Activated T-helper 1 cell treated with anti-CD3 and anti-CD28 coated beads, Interleukin-12 subunit alpha, Interleukin-12 subunit beta, Interleukin-2, Interleukin-4 antibody, amounts not matched to agents 30 ng/mL and 10 ng/mL and 1 ng/mL, durations not matched to agents 14 hours and 24 hours and 36 hours (primary cell): ENCODE measurements at regions of chr19 and their contacts with region 1.

Region 1: DNA sequence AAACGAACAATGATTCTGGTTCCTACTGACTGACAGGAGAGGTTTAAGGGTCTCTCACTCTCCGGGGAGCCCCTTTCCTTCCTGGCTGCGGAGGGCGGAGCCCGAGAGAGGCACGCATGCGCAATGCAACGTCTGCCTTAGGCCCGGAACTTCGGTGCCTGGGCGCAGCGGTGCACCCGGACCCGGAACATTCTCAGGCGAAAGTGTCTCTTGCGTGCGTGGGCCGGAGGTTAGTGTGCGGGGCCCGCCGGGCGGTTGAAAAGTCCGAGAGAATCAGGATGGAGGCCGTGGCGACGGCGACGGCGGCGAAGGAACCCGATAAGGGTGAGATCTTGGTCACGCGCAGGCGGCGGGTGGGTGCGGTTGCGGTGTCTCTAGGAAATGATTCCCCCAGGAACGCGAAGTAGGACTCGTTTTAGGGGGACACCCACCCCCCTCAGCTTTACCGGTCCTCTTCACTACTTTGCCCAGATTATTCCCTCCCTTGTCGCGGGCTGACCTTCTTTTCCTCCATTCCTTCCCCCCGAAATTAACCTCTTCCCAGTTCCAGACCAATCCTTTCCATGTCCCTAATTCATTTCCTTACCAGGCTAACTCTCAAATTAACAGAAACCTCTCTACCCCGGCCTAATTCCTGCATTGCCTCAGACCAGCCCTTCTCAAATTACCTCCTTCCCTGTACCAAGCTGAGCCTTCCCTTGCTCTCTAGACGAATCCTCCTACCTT is at the start of gene CCDC97:
- DNase-seq: peak; percentile 89
- H3K4me3 Mint-ChIP-seq: peak within 1 kb of the TSS; percentile 95
- H3K27ac Mint-ChIP-seq: peak within 1 kb of the TSS; percentile 94
- H3K4me1 Mint-ChIP-seq: peaks cover 65% of the 10 kb centered on the region
- H3K27me3 Mint-ChIP-seq: no peaks in the 10 kb centered on the region
- total RNA-seq, gene CCDC97: 35.3 and 36.1 TPM in 2 replicates

Region 2: GRCh38 chr19:40974633-40975037 is 335.6 kb before region 1 on chr19:
- intact Hi-C with region 1: loop called (anchors 5 kb)
- DNase-seq: peak; percentile 62
- H3K4me3 Mint-ChIP-seq: peak overlapping the region; percentile 24
- H3K27ac Mint-ChIP-seq: no peak overlapping the region
- H3K4me1 Mint-ChIP-seq: peaks cover 48% of the 10 kb centered on the region
- H3K27me3 Mint-ChIP-seq: peaks cover 4% of the 10 kb centered on the region

Region 3: GRCh38 chr19:41123716-41124294 is 186.4 kb before region 1 on chr19:
- intact Hi-C with region 1: loop called (anchors 5 kb)
- DNase-seq: no peak
- H3K4me3 Mint-ChIP-seq: no peak overlapping the region
- H3K27ac Mint-ChIP-seq: no peak overlapping the region
- H3K4me1 Mint-ChIP-seq: peaks cover 29% of the 10 kb centered on the region
- H3K27me3 Mint-ChIP-seq: peaks cover 15% of the 10 kb centered on the region

Region 4: DNA sequence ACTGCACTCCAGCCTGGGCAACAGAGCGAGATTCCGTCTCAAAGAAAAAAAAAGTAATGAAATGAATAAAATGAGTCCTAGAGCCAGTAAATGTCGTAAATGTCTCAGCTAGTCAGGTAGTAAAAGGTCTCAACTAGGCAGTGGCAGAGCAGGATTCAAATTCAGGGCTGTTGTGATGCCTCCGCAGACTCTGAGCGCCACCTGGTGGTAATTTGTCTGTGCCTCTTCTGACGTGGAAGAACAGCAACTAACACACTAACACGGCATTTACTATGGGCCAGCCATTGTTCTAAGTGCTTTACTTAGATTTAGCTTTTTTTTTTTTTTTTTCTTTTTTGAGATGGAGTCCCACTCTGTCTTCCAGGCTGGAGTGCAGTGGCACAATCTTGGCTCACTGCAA is 165.8 kb before region 1 on chr19:
- intact Hi-C with region 1: loop called (anchors 5 kb)
- DNase-seq: peak; percentile 80
- H3K4me3 Mint-ChIP-seq: no peak overlapping the region
- H3K27ac Mint-ChIP-seq: no peak overlapping the region
- H3K4me1 Mint-ChIP-seq: no peaks in the 10 kb centered on the region
- H3K27me3 Mint-ChIP-seq: peaks cover 18% of the 10 kb centered on the region

Region 5: DNA sequence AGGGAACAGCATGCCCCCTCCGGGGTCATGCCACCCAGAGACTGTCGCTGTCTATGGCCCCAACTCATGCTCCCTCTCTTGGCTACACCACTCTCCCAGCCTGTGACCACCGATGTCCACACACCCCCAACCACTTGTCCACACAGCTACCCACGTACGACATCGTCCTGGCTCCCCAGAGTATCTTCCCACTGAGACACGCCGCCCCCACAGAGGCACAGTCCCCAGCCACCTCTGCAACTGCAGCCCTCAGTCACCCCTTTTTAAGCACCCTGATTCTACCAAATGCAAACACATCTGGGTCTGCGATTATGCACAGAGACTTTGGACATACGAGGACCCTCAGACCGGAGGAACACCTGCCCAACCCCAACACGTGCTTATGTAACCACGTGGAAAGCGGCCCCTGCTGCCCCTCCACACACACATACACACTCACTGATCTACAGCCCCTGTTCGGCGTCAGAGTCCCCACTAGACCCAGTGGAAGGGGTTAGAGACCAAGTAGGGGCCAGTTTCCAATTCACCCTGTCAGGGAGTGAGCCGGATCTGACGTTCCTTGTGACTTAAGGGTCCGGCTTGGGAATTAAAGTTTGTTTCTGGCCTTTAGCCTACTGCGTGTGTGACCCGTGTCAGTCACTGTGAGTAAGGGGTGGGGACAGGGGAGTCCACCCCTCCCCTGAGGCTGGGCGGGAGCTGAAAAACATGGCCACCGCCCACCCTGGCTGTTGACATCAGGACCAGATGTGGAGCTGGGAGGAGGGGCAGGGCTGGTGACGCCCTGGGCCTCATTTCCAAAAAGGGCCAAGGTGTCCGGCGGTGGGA is 103.1 kb before region 1 on chr19:
- intact Hi-C with region 1: loop called (anchors 1 kb)
- DNase-seq: no peak
- H3K4me3 Mint-ChIP-seq: no peak overlapping the region
- H3K27ac Mint-ChIP-seq: no peak overlapping the region
- H3K4me1 Mint-ChIP-seq: peaks cover 18% of the 10 kb centered on the region
- H3K27me3 Mint-ChIP-seq: no peaks in the 10 kb centered on the region

Region 6: DNA sequence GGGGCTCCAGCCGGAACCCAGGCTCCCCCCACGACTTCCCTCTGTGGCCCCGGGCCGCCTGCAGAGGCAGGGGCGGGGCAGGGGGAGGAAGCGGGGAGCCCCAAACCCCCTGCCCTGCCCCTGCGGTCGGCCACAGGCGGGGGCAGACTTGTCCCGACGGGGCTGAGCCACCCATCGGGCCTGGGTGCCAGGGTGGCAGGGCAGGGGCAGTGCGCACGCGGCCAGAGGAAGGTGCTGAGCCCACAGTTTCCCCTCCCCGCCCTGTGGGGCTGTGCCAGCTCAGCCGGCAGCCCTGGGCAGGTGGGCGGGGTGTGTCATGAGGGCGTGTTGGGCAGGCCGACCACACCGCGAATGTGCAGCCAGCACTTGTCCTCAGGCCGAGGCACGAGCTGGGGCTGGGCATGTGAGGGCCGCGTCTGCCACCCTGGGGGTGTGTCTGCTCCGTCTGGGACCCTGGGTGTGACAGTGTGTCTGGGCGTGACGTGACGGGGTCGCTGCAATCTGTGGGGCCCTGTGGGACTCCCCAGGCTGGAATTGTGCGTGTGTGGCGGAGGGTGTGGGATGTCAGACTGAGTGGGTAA is 17.5 kb after region 1 on chr19:
- intact Hi-C with region 1: loop called (anchors 1 kb)
- DNase-seq: peak; percentile 67
- H3K4me3 Mint-ChIP-seq: peak overlapping the region; percentile 76
- H3K27ac Mint-ChIP-seq: peak overlapping the region; percentile 95
- H3K4me1 Mint-ChIP-seq: peaks cover 59% of the 10 kb centered on the region
- H3K27me3 Mint-ChIP-seq: no peaks in the 10 kb centered on the region

Region 7: GRCh38 chr19:41341669-41342490 is 31.7 kb after region 1 on chr19:
- intact Hi-C with region 1: no loop called
- DNase-seq: no peak
- H3K4me3 Mint-ChIP-seq: no peak overlapping the region
- H3K27ac Mint-ChIP-seq: no peak overlapping the region
- H3K4me1 Mint-ChIP-seq: peaks cover 15% of the 10 kb centered on the region
- H3K27me3 Mint-ChIP-seq: no peaks in the 10 kb centered on the region

Region 8: DNA sequence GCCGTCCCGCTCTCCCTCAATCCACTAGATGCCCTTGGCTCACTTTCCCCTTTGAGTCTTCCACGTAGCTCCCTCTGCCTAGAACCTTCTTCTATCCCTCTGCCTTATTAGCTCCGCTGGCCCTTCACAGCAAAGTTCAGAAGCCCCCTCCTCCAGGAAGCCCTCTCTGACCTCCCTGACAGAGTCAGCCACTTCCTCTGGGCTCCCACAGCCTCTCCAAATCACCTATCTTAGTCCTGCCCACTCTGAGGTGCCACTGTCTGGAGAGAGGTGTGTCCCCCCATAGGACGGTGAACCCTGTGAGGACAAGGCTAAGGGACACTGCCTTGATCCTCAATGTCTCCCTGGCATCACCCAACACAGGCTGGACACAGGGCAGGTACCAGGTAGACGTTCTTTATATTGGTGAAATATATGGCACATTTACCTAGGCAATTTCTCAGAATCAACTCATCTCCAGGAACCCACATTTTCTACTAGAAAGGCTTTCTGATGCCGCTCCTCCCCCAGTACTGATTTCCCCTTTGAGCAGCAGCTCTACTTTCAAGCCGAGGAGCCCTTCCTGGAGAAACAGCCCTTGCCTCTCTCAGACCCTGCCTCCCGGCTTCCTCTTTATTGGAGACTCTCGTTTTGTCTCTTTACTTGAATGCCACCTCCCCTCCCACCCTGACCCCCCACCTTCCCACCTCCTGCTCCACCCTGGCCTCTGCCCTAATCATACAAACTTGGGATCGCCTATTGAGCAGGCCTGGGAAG is 47.0 kb after region 1 on chr19:
- intact Hi-C with region 1: no loop called
- DNase-seq: no peak
- H3K4me3 Mint-ChIP-seq: peak overlapping the region; percentile 41
- H3K27ac Mint-ChIP-seq: peak overlapping the region; percentile 82
- H3K4me1 Mint-ChIP-seq: peaks cover 52% of the 10 kb centered on the region
- H3K27me3 Mint-ChIP-seq: no peaks in the 10 kb centered on the region

Region 9: GRCh38 chr19:41439441-41440222 is 129.4 kb after region 1 on chr19 and contains the start of gene DMAC2:
- intact Hi-C with region 1: loop called (anchors 5 kb)
- DNase-seq: peak; percentile 93
- H3K4me3 Mint-ChIP-seq: no peak within 1 kb of the TSS
- H3K27ac Mint-ChIP-seq: no peak within 1 kb of the TSS
- H3K4me1 Mint-ChIP-seq: peaks cover 5% of the 10 kb centered on the region
- H3K27me3 Mint-ChIP-seq: peaks cover 5% of the 10 kb centered on the region
- total RNA-seq, gene DMAC2: 56.7 and 57.3 TPM in 2 replicates